ENCODE measurements at regions of chr1 and their contacts with region 1.

Region 1: DNA sequence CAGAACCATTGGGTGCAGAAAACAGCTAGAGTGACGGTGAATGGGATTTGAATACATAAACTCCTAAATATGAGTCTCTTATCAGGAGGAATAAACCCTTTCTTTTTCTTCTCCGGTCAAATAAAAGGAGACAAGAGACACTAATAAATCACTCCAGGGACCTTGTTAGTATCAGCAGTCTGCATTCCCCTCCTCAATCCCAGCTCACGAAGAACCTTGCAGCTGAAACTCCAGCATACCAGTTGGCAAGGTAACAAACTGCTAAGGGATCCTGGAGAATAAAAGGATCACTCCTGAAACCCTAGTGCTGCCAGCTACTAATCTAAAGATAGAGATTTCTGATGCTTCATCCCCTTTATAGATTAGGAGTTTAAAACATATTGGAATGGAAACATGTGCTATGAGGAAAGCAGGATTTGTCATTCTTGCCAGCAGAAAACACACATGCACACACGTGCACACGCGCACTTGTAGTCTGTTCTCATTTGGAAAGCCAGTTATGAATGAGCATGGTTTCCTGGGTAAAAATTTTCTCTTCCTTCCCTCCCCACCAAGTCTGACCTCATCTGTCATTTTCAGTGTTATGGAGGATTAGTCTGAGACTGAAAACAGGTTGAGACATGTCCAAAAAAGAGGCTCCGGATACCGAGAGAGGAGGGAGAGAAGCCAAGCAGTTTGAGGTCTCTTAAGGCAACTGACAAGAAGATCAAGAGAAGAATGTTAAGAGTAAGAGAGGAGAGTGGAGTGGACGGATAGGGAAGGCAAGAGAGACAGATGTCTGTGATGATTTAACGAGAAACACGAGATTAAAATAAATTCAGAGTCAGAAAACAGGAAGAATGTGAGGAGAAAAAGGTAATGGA is 10.9 kb downstream of the IER5 start:
- H3K4me3 ChIP-seq: no peak overlapping the region
- H3K27ac ChIP-seq: peak overlapping the region; percentile 85
- H3K4me1 ChIP-seq: peaks cover 52% of the 10 kb centered on the region
- CTCF ChIP-seq: no peak

Region 2: GRCh38 chr1:181117638-181118449 is 18.5 kb after region 1 on chr1:
- CTCF ChIA-PET with region 1: interaction called, 4 read pairs
- POLR2A ChIA-PET with region 1: interaction called, 27 read pairs
- H3K4me3 ChIP-seq: no peak overlapping the region
- H3K27ac ChIP-seq: peak overlapping the region; percentile 27; the same call in 1 of the 2 replicates
- H3K4me1 ChIP-seq: peaks cover 5% of the 10 kb centered on the region; the same call in 1 of the 2 replicates
- CTCF ChIP-seq: no peak

Region 3: DNA sequence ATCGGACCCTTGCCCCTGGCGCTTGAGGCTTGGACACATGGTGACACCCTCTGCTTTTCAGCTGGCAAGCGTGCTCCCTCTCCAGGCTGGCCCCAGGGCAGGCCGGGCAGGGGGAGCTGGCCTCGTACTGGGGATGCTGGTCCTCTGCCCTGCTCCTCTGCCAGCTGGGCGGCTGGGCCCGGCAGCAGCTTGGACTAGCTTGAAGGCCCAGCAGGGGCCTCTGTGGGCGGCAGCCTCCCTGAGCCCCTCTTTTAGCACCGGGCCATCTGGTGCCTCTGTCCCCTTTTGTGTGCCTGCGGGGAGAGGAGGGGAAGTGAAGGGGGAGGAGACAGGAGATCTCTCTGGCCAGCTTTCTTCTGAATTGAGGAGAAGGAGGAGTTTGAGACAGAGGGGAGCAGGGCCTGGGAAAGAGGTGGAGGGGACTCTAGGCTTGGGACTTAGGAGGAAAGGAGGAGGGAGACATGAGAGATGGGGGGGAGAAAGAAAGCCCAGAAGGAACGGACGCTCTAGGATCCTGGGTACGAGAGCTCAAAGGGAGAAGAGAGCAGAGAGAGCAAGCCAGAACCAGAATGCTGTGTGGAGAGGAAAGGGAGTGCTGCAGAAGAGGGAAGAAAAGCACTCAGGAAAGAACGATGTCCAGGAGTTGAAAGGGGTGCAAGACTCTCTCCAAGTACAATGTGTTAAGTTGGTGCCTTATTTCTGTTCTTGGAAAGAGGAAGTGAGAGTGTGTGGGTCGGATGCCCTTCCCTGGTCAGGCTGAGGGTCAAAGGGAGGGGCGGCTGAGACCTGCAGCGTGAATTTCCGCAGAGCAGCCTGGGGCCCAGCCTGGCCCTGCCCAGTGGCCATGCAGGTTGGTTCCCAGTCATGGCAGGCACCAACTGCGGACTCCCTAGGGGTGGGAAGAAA is 29.5 kb after region 1 on chr1:
- CTCF ChIA-PET with region 1: interaction called, 3 read pairs
- POLR2A ChIA-PET with region 1: interaction called, 25 read pairs
- H3K4me3 ChIP-seq: no peak overlapping the region
- H3K27ac ChIP-seq: no peak overlapping the region
- H3K4me1 ChIP-seq: peaks cover 3% of the 10 kb centered on the region; the same call in 1 of the 2 replicates
- CTCF ChIP-seq: no peak

Region 4: GRCh38 chr1:181134543-181135362 is 35.4 kb after region 1 on chr1:
- CTCF ChIA-PET with region 1: interaction called, 69 read pairs
- POLR2A ChIA-PET with region 1: interaction called, 28 read pairs
- H3K4me3 ChIP-seq: no peak overlapping the region
- H3K27ac ChIP-seq: peak overlapping the region; percentile 94
- H3K4me1 ChIP-seq: peaks cover 9% of the 10 kb centered on the region
- CTCF ChIP-seq: no peak

Region 5: GRCh38 chr1:181296180-181296579 is 196.8 kb after region 1 on chr1:
- CTCF ChIA-PET with region 1: no interaction called
- POLR2A ChIA-PET with region 1: no interaction called
- H3K4me3 ChIP-seq: no peak overlapping the region
- H3K27ac ChIP-seq: no peak overlapping the region
- H3K4me1 ChIP-seq: no peaks in the 10 kb centered on the region
- CTCF ChIP-seq: no peak

Region 6: DNA sequence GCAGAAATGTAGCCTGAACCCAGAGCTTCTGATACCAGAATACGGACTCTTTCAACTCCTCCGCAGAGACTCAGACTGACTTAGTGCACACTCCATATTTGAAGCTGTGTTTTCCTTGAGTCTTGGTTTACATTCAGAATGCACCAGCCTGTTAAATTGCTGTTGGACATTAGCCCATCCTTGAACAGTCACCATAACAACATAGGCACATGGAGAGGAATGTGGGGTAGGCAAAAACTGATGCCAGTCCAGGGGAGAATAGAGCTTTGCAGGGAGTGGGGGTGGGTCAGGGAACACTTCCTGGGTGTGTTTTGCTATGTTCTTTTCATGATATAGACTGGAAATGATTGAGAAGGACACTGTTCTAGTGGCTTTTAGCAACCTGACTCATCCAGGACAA is 307.6 kb after region 1 on chr1:
- CTCF ChIA-PET with region 1: no interaction called
- POLR2A ChIA-PET with region 1: no interaction called
- H3K4me3 ChIP-seq: no peak overlapping the region
- H3K27ac ChIP-seq: no peak overlapping the region
- H3K4me1 ChIP-seq: no peaks in the 10 kb centered on the region
- CTCF ChIP-seq: no peak